CD4-positive, alpha-beta T cell (primary cell): ENCODE measurements at regions of chr3 and their contacts with region 1.

Region 1: GRCh38 chr3:58008140-58009025 is at the start of gene FLNB:
- DNase-seq: peak; percentile 64 to 94 (median 76)
- ATAC-seq: peak; percentile 82
- H3K4me3 ChIP-seq: peak within 1 kb of the TSS; percentile 99
- H3K4me3 Mint-ChIP-seq: peak within 1 kb of the TSS; percentile 84
- H3K27ac ChIP-seq: peak within 1 kb of the TSS in 1 of 2 donors; percentile 30
- H3K27ac Mint-ChIP-seq: peak within 1 kb of the TSS; percentile 77
- H3K4me1 ChIP-seq: peaks cover 49% of the 10 kb centered on the region
- H3K4me1 Mint-ChIP-seq: peaks cover 44% of the 10 kb centered on the region
- H3K27me3 ChIP-seq: no peaks in the 10 kb centered on the region
- H3K27me3 Mint-ChIP-seq: no peaks in the 10 kb centered on the region
- CTCF ChIP-seq: peak; percentile 67
- total RNA-seq, gene FLNB: 39.7 to 42.1 TPM

Region 2: GRCh38 chr3:58020783-58021071 is 12.3 kb after region 1 on chr3:
- CTCF ChIA-PET with region 1: interaction called, 4 read pairs
- POLR2A ChIA-PET with region 1: interaction called, 10 read pairs
- intact Hi-C with region 1: no loop called
- DNase-seq: no peak
- ATAC-seq: no peak
- H3K4me3 ChIP-seq: no peak overlapping the region
- H3K4me3 Mint-ChIP-seq: no peak overlapping the region
- H3K27ac ChIP-seq: no peak overlapping the region
- H3K27ac Mint-ChIP-seq: no peak overlapping the region
- H3K4me1 ChIP-seq: peaks cover 20% of the 10 kb centered on the region
- H3K4me1 Mint-ChIP-seq: peaks cover 58% of the 10 kb centered on the region
- H3K27me3 ChIP-seq: no peaks in the 10 kb centered on the region
- H3K27me3 Mint-ChIP-seq: no peaks in the 10 kb centered on the region
- CTCF ChIP-seq: no peak

Region 3: GRCh38 chr3:58049143-58049785 is 40.9 kb after region 1 on chr3:
- CTCF ChIA-PET with region 1: no interaction called
- POLR2A ChIA-PET with region 1: no interaction called
- intact Hi-C with region 1: no loop called
- DNase-seq: no peak
- ATAC-seq: no peak
- H3K4me3 ChIP-seq: no peak overlapping the region
- H3K4me3 Mint-ChIP-seq: no peak overlapping the region
- H3K27ac ChIP-seq: no peak overlapping the region
- H3K27ac Mint-ChIP-seq: no peak overlapping the region
- H3K4me1 ChIP-seq: peaks cover 10% of the 10 kb centered on the region
- H3K4me1 Mint-ChIP-seq: peaks cover 43% of the 10 kb centered on the region
- H3K27me3 ChIP-seq: no peaks in the 10 kb centered on the region
- H3K27me3 Mint-ChIP-seq: no peaks in the 10 kb centered on the region
- CTCF ChIP-seq: no peak

Region 4: GRCh38 chr3:58116161-58116955 is 108.0 kb after region 1 on chr3:
- CTCF ChIA-PET with region 1: no interaction called
- POLR2A ChIA-PET with region 1: interaction called, 7 read pairs
- intact Hi-C with region 1: loop called (anchors 1 to 5 kb)
- DNase-seq: peak; percentile 10 to 87 (median 47)
- ATAC-seq: peak; percentile 93
- H3K4me3 ChIP-seq: no peak overlapping the region
- H3K4me3 Mint-ChIP-seq: peak overlapping the region; percentile 42
- H3K27ac ChIP-seq: peak overlapping the region; percentile 29 to 58
- H3K27ac Mint-ChIP-seq: peak overlapping the region; percentile 85
- H3K4me1 ChIP-seq: peaks cover 23% of the 10 kb centered on the region
- H3K4me1 Mint-ChIP-seq: peaks cover 40% of the 10 kb centered on the region
- H3K27me3 ChIP-seq: no peaks in the 10 kb centered on the region
- H3K27me3 Mint-ChIP-seq: no peaks in the 10 kb centered on the region
- CTCF ChIP-seq: no peak

Region 5: GRCh38 chr3:58217209-58217811 is 208.9 kb after region 1 on chr3:
- CTCF ChIA-PET with region 1: interaction called, 9 read pairs
- POLR2A ChIA-PET with region 1: interaction called, 12 read pairs
- intact Hi-C with region 1: loop called (anchors 1 kb)
- DNase-seq: peak; percentile 21 to 80 (median 43)
- ATAC-seq: peak; percentile 93
- H3K4me3 ChIP-seq: no peak overlapping the region
- H3K4me3 Mint-ChIP-seq: no peak overlapping the region
- H3K27ac ChIP-seq: no peak overlapping the region
- H3K27ac Mint-ChIP-seq: no peak overlapping the region
- H3K4me1 ChIP-seq: peaks cover 6% of the 10 kb centered on the region
- H3K4me1 Mint-ChIP-seq: peaks cover 6% of the 10 kb centered on the region
- H3K27me3 ChIP-seq: no peaks in the 10 kb centered on the region
- H3K27me3 Mint-ChIP-seq: no peaks in the 10 kb centered on the region
- CTCF ChIP-seq: peak; percentile 76

Region 6: GRCh38 chr3:58299839-58300516 is 291.6 kb after region 1 on chr3:
- CTCF ChIA-PET with region 1: no interaction called
- POLR2A ChIA-PET with region 1: no interaction called
- intact Hi-C with region 1: loop called (anchors 5 to 10 kb)
- DNase-seq: peak in 2 of 14 experiments; percentile 23 to 36
- ATAC-seq: no peak
- H3K4me3 ChIP-seq: no peak overlapping the region
- H3K4me3 Mint-ChIP-seq: no peak overlapping the region
- H3K27ac ChIP-seq: no peak overlapping the region
- H3K27ac Mint-ChIP-seq: no peak overlapping the region
- H3K4me1 ChIP-seq: no peaks in the 10 kb centered on the region
- H3K4me1 Mint-ChIP-seq: no peaks in the 10 kb centered on the region
- H3K27me3 ChIP-seq: peaks cover 26 to 29% of the 10 kb centered on the region in 2 experiments
- H3K27me3 Mint-ChIP-seq: peaks cover 35% of the 10 kb centered on the region
- CTCF ChIP-seq: no peak

Region 7: DNA sequence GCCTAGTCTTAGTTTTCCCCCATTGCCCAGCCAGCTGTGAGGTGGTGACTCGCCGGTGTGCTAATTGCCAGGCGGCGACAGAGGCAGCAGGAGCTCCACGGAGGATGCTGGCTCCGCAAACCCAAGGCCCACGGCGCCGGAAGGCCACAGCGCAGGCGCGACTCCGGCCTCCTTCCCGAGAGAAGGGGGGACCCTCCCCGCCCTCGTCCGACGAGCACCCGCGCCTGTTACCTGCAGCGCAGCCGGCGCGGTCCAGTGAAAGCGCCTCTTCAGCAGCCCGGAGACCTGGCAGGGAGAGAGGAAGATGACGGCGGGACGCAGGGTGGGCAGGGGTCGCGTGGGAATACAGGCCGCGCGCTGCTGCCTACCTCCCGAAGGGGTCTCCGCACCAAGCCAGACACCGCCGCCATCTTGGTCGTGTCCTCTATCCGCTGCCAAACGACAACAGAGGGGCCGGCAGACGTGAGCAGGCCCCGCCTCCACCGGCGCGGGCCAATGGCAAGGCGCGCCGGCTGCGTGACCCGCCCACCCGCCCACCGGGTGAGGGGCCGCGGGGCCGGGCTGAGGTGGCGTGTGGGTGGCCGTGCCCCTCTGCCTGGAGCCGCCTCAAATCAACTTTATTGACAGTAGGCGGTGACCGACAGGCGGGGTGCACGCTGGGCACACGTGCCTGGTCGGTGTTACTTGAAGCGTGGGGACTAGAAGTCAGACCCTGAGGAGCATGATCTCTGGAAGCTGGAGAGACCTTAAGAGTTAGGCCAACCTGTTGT is 425.2 kb after region 1 on chr3 and contains the start of gene PDHB:
- CTCF ChIA-PET with region 1: no interaction called
- POLR2A ChIA-PET with region 1: no interaction called
- intact Hi-C with region 1: loop called (anchors 10 kb)
- DNase-seq: peak; percentile 77 to 94 (median 86)
- ATAC-seq: peak; percentile 96
- H3K4me3 ChIP-seq: peak within 1 kb of the TSS; percentile 93
- H3K4me3 Mint-ChIP-seq: peak within 1 kb of the TSS; percentile 90
- H3K27ac ChIP-seq: peak within 1 kb of the TSS; percentile 79 to 85
- H3K27ac Mint-ChIP-seq: peak within 1 kb of the TSS; percentile 86
- H3K4me1 ChIP-seq: peaks cover 20% of the 10 kb centered on the region
- H3K4me1 Mint-ChIP-seq: peaks cover 33% of the 10 kb centered on the region
- H3K27me3 ChIP-seq: no peaks in the 10 kb centered on the region
- H3K27me3 Mint-ChIP-seq: no peaks in the 10 kb centered on the region
- CTCF ChIP-seq: no peak
- total RNA-seq, gene PDHB: 31.1 to 31.5 TPM